OCI-LY7 (cell line): ENCODE measurements at regions of chr17 and their contacts with region 1.

Region 1: DNA sequence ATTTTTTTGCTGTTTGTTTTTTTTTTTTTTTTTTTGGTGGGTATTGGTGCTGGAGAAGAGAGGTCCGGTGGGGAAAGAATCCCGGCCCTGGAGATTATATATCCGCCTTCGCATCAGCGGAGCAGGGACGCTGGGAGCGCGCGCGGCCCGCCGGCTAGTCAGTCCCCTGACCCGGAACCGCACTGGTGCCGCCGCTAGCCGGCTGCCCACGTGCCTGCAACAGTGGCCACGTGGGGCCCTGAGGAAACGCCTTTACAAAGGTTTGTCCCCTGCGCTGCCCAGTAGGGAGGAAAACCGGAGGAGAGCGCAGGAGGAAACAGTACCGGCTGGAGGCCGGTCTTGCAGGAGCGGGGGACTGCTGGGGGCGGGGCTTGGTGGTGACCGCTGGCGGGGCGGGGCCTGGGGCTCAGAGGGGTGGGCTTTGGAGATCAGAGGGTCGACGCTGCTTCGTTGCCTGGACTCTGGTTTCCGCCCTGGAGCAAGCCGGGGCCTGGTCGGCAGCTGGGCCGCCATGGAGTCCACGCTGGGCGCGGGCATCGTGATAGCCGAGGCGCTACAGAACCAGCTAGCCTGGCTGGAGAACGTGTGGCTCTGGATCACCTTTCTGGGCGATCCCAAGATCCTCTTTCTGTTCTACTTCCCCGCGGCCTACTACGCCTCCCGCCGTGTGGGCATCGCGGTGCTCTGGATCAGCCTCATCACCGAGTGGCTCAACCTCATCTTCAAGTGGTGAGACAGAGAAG is at the start of gene G6PC3:
- DNase-seq: peak; percentile 89
- H3K4me3 ChIP-seq: peak within 1 kb of the TSS; percentile 76
- H3K27ac ChIP-seq: peak within 1 kb of the TSS; percentile 67
- H3K4me1 ChIP-seq: peaks cover 31% of the 10 kb centered on the region
- CTCF ChIP-seq: no peak
- total RNA-seq, gene G6PC3: 10.7 and 20.6 TPM in 2 replicates

Region 2: DNA sequence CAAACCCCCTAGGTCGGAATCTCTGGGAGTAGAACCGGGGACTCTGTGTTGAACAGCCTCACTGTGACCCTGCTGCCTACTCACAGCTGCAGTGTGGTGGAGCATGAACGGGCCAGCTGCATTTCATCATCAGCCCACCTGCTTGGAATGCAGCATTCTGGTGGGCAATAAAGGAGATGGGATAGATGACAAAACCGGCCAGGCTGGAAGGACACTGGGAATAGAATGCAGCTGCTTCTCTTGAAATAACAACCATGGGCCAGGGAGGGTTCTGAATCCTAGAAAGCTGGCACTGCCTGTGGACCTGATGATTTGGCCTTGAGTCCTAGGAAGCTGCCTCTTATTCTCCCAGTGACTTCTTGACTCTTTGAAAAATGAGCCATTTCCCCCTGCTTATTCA is 266.9 kb before region 1 on chr17:
- CTCF ChIA-PET with region 1: no interaction called
- POLR2A ChIA-PET with region 1: no interaction called
- intact Hi-C with region 1: no loop called
- DNase-seq: no peak
- H3K4me3 ChIP-seq: no peak overlapping the region
- H3K27ac ChIP-seq: no peak overlapping the region
- H3K4me1 ChIP-seq: no peaks in the 10 kb centered on the region
- CTCF ChIP-seq: no peak

Region 3: GRCh38 chr17:43966271-43966670 is 104.4 kb before region 1 on chr17:
- CTCF ChIA-PET with region 1: no interaction called
- POLR2A ChIA-PET with region 1: no interaction called
- intact Hi-C with region 1: no loop called
- DNase-seq: no peak
- H3K4me3 ChIP-seq: no peak overlapping the region
- H3K27ac ChIP-seq: no peak overlapping the region
- H3K4me1 ChIP-seq: no peaks in the 10 kb centered on the region
- CTCF ChIP-seq: no peak

Region 4: DNA sequence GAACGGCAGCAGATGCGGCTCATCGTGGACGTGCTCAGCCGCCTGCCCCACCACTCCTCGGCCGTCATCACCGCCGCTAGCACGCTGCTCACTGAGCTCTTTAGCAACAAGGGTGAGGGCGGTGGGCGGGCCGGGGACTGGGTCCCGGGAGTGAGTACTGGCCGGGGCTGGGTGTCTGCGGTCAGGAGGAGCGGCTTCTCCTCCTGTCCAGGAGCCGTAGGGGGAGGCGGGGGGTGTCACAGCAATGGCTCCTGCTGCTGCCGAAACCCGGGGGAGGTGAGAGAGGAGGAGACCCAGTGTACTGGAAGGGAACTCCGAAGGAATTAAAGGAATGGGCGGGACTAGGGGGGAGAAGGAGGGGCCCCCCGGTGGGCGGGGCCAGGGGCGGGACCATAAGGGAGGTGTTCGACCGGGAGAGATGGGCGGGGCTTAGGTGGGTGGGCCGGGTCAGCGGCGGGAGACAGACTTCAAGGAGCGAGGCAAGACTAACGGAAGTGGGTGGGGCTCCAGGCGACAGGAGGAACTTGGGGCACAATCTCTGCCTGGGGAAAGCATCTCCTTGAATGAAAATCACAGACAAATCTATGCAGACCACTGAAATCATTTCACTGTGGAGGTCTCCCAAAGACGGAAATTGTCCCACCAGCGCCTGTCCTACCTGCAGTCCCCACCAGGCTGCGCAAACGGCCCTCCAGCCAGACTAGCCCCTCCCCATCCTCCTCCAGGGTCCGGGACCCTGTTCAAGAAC is 63.9 kb before region 1 on chr17:
- CTCF ChIA-PET with region 1: interaction called, 3 read pairs
- POLR2A ChIA-PET with region 1: no interaction called
- intact Hi-C with region 1: loop called (anchors 2 kb)
- DNase-seq: peak; percentile 96
- H3K4me3 ChIP-seq: peak overlapping the region; percentile 73
- H3K27ac ChIP-seq: peak overlapping the region; percentile 49
- H3K4me1 ChIP-seq: peaks cover 23% of the 10 kb centered on the region
- CTCF ChIP-seq: peak; percentile 69

Region 5: GRCh38 chr17:44123356-44124117 is 52.9 kb after region 1 on chr17 and contains the start of gene HDAC5:
- CTCF ChIA-PET with region 1: interaction called, 4 read pairs
- POLR2A ChIA-PET with region 1: interaction called, 3 read pairs
- intact Hi-C with region 1: loop called (anchors 5 kb)
- DNase-seq: peak; percentile 96
- H3K4me3 ChIP-seq: peak within 1 kb of the TSS; percentile 85
- H3K27ac ChIP-seq: peak within 1 kb of the TSS; percentile 62
- H3K4me1 ChIP-seq: peaks cover 25% of the 10 kb centered on the region
- CTCF ChIP-seq: peak; percentile 78
- total RNA-seq, gene HDAC5: 26.4 and 41.5 TPM in 2 replicates

Region 6: DNA sequence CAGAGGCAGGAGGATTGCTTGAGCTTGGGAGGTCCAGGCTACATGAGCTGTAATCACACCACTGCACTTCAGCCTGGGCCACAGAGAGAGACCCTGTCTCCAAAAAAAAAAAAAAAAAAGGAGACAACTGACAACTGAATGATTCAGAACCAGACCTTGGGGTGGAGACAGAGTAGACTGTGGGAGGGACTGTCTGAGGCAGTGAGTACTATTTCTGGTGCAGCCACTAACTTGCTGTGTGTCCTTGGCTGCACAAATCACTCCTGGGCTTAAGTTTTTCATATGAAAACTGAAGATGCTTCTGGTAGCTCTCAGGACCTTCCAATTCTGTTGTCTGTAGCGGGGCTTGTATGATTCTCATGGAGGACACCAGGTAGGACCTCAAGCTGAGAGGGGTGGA is 105.6 kb after region 1 on chr17:
- CTCF ChIA-PET with region 1: no interaction called
- POLR2A ChIA-PET with region 1: no interaction called
- intact Hi-C with region 1: no loop called
- DNase-seq: no peak
- H3K4me3 ChIP-seq: no peak overlapping the region
- H3K27ac ChIP-seq: no peak overlapping the region
- H3K4me1 ChIP-seq: peaks cover 4% of the 10 kb centered on the region
- CTCF ChIP-seq: no peak

Region 7: GRCh38 chr17:44186307-44187130 is 115.9 kb after region 1 on chr17 and contains the start of gene TMUB2:
- CTCF ChIA-PET with region 1: no interaction called
- POLR2A ChIA-PET with region 1: no interaction called
- intact Hi-C with region 1: loop called (anchors 5 kb)
- DNase-seq: peak; percentile 100
- H3K4me3 ChIP-seq: peak within 1 kb of the TSS; percentile 76
- H3K27ac ChIP-seq: peak within 1 kb of the TSS; percentile 68
- H3K4me1 ChIP-seq: peaks cover 26% of the 10 kb centered on the region
- CTCF ChIP-seq: no peak
- total RNA-seq, gene TMUB2: 16.0 and 21.3 TPM in 2 replicates